Activated T-helper 1 cell treated with anti-CD3 and anti-CD28 coated beads, Interleukin-12 subunit alpha, Interleukin-12 subunit beta, Interleukin-2, Interleukin-4 antibody, amounts not matched to agents 30 ng/mL and 10 ng/mL and 1 ng/mL, durations not matched to agents 14 hours and 24 hours and 36 hours (primary cell): ENCODE measurements at regions of chr20 and their contacts with region 1.

Region 1: DNA sequence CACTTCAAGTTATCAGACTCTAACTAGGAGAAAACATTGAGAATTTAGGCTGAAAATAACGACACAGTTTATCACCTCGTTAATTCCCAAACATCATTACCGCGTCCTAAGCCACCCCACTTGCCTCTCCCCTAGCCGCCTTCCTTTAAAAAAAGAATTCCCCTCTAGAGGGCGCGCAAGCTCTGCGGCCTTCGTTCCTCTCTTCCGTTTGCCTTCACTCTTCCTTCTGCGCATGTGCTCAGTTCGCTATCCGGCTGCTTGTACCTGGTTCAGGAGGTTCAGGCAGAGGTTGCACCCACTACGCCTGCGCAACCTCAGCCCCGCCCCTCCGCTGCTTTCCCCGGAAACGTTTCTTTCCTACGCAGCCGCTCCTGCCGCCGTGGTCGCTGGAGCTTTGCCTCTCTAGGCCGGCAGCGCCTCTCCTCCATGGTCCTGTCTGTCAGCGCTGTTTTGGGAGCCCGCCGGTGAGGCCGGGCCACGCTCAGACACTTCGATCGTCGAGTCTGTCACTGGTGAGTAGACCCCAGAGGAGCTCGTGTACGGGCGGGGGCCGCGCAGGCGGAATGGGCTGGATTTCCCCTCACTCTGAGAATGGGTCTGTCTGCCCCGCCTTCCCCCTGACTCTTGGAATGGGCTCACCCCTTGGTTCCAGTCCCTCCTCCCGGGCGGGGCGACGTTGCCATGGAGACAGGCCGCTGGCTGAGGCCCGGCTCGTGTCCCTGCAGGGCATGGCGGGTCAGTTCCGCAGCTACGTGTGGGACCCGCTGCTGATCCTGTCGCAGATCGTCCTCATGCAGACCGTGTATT is at the start of gene SYS1:
- DNase-seq: peak; percentile 97
- H3K4me3 Mint-ChIP-seq: peak within 1 kb of the TSS; percentile 95
- H3K27ac Mint-ChIP-seq: peak within 1 kb of the TSS; percentile 97
- H3K4me1 Mint-ChIP-seq: peaks cover 69% of the 10 kb centered on the region
- H3K27me3 Mint-ChIP-seq: no peaks in the 10 kb centered on the region
- total RNA-seq, gene SYS1: 25.6 and 26.4 TPM in 2 replicates

Region 2: GRCh38 chr20:45235995-45236394 is 127.0 kb before region 1 on chr20:
- intact Hi-C with region 1: no loop called
- DNase-seq: no peak
- H3K4me3 Mint-ChIP-seq: no peak overlapping the region
- H3K27ac Mint-ChIP-seq: no peak overlapping the region
- H3K4me1 Mint-ChIP-seq: no peaks in the 10 kb centered on the region
- H3K27me3 Mint-ChIP-seq: peaks cover 27% of the 10 kb centered on the region

Region 3: DNA sequence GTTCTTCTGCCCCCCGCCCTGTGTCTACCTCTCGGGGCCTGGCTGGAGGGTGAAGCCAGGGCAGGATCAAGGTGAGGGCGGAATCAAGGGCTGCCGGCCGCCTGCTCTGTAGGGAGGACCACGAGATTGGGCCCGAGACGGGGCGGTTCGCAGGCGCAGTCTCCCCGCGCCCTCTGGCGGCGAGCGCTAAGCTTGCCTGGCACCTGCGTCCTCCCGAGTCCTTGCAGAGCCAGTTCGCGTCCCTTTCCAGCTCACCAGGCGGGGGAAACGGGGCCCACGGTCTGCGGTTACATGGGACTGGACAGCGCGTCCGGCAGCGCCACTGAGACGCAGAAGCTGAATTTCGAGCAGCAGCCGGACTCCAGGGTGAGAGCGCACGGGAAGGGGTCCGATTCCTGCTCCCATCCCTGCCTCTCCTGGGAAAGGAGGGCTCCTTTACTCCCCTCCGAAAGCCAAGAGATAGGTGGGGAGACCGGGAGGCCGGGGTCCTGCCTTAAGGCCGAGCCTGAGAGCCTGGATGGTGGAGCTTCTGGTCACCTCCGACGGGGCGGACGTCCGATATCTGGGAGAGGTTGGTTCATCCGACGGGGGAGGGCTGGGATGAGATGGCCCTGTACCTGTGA is 51.3 kb before region 1 on chr20:
- intact Hi-C with region 1: no loop called
- DNase-seq: peak; percentile 63
- H3K4me3 Mint-ChIP-seq: no peak overlapping the region
- H3K27ac Mint-ChIP-seq: no peak overlapping the region
- H3K4me1 Mint-ChIP-seq: peaks cover 27% of the 10 kb centered on the region
- H3K27me3 Mint-ChIP-seq: peaks cover 5% of the 10 kb centered on the region

Region 4: DNA sequence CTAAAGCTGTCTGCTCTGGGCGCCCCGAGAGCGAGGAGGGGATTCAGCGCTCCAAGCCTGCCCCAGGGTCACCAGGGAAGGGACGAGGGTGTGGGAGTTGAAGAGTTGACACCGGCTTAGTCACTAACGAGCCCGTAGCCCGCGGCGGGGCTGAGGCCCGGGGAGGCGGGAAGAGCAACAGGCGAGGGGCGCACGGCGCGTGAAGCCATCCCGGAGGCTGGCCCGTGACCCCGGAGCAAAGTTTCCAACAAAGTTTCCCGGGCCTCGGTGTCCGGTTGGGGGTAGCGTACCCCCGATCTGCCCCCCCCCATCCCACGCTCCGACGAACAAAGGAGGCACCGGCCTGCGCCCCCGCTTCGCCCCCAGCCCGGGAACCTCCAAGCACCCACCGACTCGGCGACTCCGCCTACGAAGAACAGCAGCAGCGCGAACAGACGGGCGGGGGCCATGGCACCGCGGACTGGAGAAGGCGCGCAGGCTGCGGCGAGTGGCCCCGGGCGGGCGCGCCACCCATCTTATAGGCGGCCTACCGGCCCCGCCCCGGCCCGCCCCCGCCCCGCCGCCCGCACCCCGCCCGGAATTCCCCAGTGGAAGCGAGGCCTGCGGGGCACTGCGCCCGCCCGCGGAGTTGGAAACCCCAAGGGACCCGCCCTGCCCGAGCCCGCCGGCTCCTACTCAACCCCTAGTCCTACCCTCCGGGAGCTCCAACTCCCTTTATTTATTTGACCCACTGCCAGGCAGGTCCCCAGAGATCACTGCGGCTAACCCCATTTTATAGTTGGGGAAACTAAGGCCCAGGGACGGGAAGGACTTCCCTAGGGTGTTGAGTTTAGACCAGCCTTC is 14.8 kb before region 1 on chr20 and contains the start of gene SDC4:
- intact Hi-C with region 1: loop called (anchors 1 kb)
- DNase-seq: peak; percentile 71
- H3K4me3 Mint-ChIP-seq: peak within 1 kb of the TSS; percentile 98
- H3K27ac Mint-ChIP-seq: peak within 1 kb of the TSS; percentile 80
- H3K4me1 Mint-ChIP-seq: peaks cover 57% of the 10 kb centered on the region
- H3K27me3 Mint-ChIP-seq: no peaks in the 10 kb centered on the region
- total RNA-seq, gene SDC4: 220 and 222 TPM in 2 replicates

Region 5: DNA sequence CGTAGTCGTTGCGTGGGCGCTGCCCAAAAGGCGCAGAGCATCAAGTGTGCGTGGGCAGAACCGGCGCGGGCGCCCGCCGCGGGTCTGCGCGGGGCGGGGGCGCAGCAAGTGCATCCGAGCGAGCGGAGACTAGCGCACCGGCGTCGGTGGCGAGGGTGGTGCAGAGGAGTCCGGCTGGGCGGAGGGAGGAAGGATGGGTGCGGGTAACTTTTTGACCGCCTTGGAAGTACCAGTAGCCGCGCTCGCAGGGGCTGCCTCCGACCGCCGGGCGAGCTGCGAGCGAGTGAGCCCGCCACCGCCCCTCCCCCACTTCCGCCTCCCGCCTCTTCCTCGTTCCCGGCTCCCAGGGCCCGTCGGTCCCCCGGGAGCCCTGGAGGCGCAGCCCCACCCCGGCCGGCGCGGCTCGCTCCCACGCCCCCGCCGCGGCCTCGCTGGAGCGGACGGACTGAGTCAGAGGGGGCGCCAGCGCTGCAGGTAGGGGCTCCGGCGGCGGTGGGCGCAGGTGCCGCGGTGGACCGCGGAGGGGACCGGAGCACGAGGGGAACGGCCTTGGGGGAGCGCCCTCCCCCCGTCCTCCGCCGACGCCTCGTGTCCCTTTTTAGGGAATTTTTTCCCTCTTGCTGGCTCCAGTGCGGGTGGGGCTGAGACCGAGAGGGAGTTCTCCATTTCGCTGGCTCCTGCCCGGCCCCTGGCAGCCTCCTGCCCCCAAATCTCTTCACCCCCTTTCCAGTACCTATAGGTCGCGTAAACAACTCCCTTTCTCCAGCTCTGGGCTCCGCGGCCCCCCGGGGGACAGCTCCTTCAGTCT is 43.5 kb after region 1 on chr20:
- intact Hi-C with region 1: loop called (anchors 2 kb)
- DNase-seq: peak; percentile 19
- H3K4me3 Mint-ChIP-seq: peak overlapping the region; percentile 80
- H3K27ac Mint-ChIP-seq: peak overlapping the region; percentile 77
- H3K4me1 Mint-ChIP-seq: peaks cover 21% of the 10 kb centered on the region
- H3K27me3 Mint-ChIP-seq: peaks cover 13% of the 10 kb centered on the region

Region 6: GRCh38 chr20:45436732-45437391 is 73.9 kb after region 1 on chr20:
- intact Hi-C with region 1: loop called (anchors 1 kb)
- DNase-seq: peak; percentile 78
- H3K4me3 Mint-ChIP-seq: peak overlapping the region; percentile 69
- H3K27ac Mint-ChIP-seq: no peak overlapping the region
- H3K4me1 Mint-ChIP-seq: peaks cover 33% of the 10 kb centered on the region
- H3K27me3 Mint-ChIP-seq: no peaks in the 10 kb centered on the region

Region 7: GRCh38 chr20:45792332-45792686 is 429.3 kb after region 1 on chr20:
- intact Hi-C with region 1: loop called (anchors 5 kb)
- DNase-seq: no peak
- H3K4me3 Mint-ChIP-seq: peak overlapping the region; percentile 82
- H3K27ac Mint-ChIP-seq: peak overlapping the region; percentile 89
- H3K4me1 Mint-ChIP-seq: peaks cover 24% of the 10 kb centered on the region
- H3K27me3 Mint-ChIP-seq: peaks cover 3% of the 10 kb centered on the region